ENCODE measurements at regions of chr5 and their contacts with region 1.

Region 1: GRCh38 chr5:150497274-150497988 is 10.5 kb upstream of the NDST1 start:
- DNase-seq: peak; percentile 99
- H3K4me3 Mint-ChIP-seq: peak overlapping the region; percentile 70
- H3K27ac Mint-ChIP-seq: peak overlapping the region; percentile 94
- H3K4me1 Mint-ChIP-seq: peaks cover 83% of the 10 kb centered on the region
- H3K27me3 Mint-ChIP-seq: no peaks in the 10 kb centered on the region
- CTCF ChIP-seq: peak; percentile 11

Region 2: DNA sequence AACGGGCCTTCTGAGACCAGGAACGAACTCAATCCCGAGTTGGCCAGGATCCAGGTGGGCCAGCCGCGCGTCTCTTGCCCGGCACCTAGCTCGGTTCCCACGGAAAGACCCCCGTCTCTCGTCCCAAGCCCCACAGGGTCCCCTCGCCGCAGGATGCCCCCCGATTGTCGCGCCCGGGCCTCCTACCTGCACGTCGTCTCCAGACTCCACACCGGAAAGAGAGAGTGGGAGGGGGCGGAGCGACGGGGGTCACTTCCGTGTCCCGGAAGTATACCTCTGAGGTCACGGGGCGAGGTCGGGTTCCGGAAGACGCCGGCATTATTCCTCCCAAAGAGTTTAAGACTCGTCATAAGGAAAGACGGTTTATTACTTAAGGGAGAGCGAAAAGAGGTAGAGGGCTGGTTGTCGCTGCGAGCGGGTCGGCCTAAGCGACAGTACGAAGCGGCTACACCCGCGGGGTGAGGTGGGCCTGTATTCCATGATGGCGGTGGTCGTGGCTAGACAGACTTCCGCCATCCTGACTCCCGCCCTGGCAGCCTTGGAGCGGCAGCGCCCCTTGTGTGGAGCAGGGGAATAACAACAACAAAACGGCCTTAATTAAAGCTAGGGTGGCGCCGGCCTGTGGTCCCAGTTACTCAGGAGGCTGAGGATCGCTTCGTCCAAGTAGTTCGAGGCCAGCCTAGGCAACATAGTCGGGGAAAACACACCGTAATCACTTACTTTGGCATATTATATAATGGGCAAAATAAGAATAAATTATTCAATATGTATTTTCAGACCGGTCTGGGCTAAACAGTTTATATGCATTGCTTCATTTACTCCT is 47.7 kb before region 1 on chr5 and contains the start of gene RPS14:
- CTCF ChIA-PET with region 1: interaction called, 28 read pairs
- POLR2A ChIA-PET with region 1: interaction called, 33 read pairs
- intact Hi-C with region 1: no loop called
- DNase-seq: peak; percentile 98
- H3K4me3 Mint-ChIP-seq: peak within 1 kb of the TSS; percentile 85
- H3K27ac Mint-ChIP-seq: peak within 1 kb of the TSS; percentile 100
- H3K4me1 Mint-ChIP-seq: peaks cover 22% of the 10 kb centered on the region
- H3K27me3 Mint-ChIP-seq: no peaks in the 10 kb centered on the region
- CTCF ChIP-seq: peak; percentile 92
- total RNA-seq, gene RPS14: 5,481 and 5,921 TPM in 2 replicates

Region 3: GRCh38 chr5:150486402-150487198 is 10.8 kb before region 1 on chr5:
- CTCF ChIA-PET with region 1: interaction called, 9 read pairs
- POLR2A ChIA-PET with region 1: interaction called, 33 read pairs
- intact Hi-C with region 1: no loop called
- DNase-seq: peak; percentile 51
- H3K4me3 Mint-ChIP-seq: peak overlapping the region; percentile 72
- H3K27ac Mint-ChIP-seq: peak overlapping the region; percentile 63
- H3K4me1 Mint-ChIP-seq: peaks cover 43% of the 10 kb centered on the region
- H3K27me3 Mint-ChIP-seq: no peaks in the 10 kb centered on the region
- CTCF ChIP-seq: peak; percentile 13

Region 4: DNA sequence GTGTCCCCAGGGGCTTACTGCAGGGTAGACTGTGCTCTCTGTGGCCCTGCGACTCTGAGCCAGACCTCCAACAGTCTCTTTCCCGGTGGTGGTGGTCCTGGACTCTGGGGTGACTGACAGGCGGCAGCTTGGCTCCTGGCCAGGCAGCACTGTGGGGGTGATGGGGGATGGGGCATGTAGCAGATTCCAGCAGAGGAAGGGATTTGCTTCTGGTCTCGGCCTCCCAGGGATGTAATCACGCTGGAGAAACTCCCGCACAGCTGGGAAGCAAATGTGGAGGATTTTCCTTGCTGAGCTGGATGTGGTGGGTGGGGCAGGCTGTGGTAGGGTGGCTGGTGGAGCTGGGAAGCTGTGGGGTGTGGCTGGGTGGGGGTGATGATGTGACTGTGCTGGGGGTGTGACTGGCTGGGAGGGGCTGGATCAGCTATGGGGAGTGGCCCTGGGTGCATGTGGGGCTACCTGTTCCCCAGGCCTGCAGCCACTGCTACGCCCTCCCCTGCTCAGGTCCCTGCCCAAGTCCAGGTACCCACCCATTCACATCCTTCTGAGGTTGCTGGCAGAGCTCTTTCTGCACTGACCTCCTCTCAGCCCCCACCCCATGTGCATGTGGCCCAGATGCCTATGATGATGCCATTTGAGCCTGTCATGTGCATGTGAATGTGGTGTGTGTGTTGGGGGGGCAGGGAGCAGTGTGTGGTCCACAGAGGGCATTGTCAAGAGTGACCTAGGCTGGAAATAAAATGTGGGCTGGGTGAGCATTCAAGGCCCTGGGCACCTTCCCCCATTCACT is 14.3 kb after region 1 on chr5:
- CTCF ChIA-PET with region 1: interaction called, 13 read pairs
- POLR2A ChIA-PET with region 1: interaction called, 45 read pairs
- intact Hi-C with region 1: no loop called
- DNase-seq: peak; percentile 64
- H3K4me3 Mint-ChIP-seq: peak overlapping the region; percentile 51
- H3K27ac Mint-ChIP-seq: peak overlapping the region; percentile 78
- H3K4me1 Mint-ChIP-seq: peaks cover 59% of the 10 kb centered on the region
- H3K27me3 Mint-ChIP-seq: no peaks in the 10 kb centered on the region
- CTCF ChIP-seq: no peak

Region 5: DNA sequence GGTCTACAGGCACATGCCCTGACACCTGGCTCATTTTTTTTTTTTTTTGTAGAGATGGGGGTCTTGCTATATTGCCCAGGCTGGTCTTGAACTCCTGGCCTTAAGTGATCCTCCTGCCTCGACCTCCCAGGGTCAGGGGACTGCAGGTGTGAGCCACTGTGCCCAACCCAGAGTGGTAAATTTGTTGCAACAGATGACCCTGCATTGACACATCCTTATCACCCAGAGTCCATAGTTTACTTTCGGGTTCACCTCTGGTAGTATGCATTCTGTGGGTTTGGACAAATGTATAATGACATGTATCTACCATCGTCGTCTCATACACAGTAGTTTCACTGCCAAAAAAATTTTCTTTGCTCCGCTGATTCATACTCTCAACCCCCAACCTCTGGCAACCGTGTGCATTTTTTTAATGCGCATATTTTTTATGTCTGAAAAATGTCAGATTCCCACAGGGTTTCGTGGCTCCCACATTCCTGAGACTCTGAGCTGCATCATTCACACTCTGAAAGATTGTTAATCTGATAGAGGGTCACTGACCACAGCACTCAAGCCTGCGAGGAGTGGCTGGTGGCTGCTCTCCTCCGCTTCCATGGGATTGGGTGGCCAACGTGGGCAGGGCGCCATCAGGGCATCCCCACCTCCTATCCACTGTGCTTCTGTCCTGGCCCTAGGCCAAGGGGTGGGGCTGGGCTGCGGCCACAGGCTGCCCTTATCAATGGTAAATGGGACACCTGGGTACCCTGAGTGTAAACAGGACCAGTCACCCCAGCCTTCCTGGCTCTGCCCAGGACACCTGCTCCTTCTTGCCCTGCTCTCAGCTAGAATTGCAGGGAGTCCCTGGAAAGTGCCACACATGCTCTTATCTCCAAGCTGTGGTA is 20.1 kb after region 1 on chr5:
- CTCF ChIA-PET with region 1: interaction called, 134 read pairs
- POLR2A ChIA-PET with region 1: interaction called, 45 read pairs
- intact Hi-C with region 1: loop called (anchors 1 kb)
- DNase-seq: peak; percentile 94
- H3K4me3 Mint-ChIP-seq: peak overlapping the region; percentile 52
- H3K27ac Mint-ChIP-seq: peak overlapping the region; percentile 71
- H3K4me1 Mint-ChIP-seq: peaks cover 45% of the 10 kb centered on the region
- H3K27me3 Mint-ChIP-seq: no peaks in the 10 kb centered on the region
- CTCF ChIP-seq: no peak